ENCODE measurements at regions of chr15 and their contacts with region 1.

Region 1: DNA sequence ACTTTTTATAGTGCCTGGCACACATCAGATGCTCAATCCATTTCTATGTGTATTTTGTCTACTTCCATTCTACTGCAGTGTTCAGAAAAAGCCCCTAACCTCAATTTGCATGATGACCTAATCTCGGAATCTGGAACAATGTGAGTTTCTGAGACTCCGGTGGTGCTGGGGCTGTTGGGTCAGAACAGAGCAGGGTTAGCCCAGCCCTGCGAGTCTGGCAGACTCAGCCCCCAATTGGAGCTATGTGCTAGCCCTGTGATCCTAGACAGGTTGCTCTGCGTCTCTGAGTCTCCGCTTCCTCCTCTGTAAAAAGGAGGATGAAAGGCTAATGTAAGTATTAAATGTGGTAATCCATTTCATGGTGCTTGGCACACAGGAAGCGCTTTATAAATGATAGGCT is 95.0 kb upstream of the ICE2 start:
- DNase-seq: peak; percentile 70
- ATAC-seq: peak; percentile 68
- H3K4me3 Mint-ChIP-seq: peak overlapping the region; percentile 58
- H3K27ac Mint-ChIP-seq: peak overlapping the region; percentile 96
- H3K4me1 Mint-ChIP-seq: peaks cover 88% of the 10 kb centered on the region
- H3K27me3 Mint-ChIP-seq: no peaks in the 10 kb centered on the region

Region 2: DNA sequence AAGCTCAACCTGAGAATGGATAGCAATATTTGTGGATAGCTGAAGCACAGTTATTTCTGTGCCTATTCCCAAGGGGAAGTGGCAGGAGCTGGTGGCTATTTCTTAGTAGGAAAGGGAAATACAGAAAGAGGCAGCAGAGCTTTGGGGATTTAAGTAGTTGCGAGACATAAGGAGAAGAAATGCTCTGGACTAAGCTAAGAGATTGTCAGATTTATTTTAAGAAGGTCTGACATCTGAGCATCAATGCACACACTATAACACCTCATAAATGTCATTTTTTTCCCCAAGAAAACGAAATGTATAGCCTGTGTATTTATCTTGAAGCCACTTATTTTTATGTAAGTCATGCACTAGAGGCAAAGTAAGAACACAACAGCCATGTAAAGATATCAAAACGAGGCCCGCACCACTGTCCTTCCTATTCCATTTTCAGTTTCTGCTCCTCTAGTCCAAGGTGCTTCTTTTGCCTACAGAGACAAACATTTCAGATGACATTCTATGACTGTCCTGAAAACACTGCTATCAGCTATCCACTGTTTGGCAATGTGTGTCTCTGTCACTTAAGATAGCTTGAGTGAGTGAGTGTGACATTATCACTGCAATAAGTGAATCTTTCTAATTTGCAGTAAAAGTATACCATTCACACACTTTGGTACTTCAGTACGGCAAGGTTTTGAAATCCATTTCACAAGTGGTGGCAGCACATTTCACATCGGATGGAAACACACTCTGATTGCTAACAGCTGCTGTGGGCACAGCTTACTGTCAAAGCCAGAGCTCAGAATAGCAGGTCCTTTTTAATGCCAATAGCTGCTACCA is 32.2 kb before region 1 on chr15:
- CTCF ChIA-PET with region 1: interaction called, 5 read pairs
- POLR2A ChIA-PET with region 1: interaction called, 5 read pairs
- intact Hi-C with region 1: loop called in 1 of 2 experiments (anchors 5 kb)
- DNase-seq: no peak
- ATAC-seq: peak; percentile 19
- H3K4me3 Mint-ChIP-seq: peak overlapping the region; percentile 12
- H3K27ac Mint-ChIP-seq: peak overlapping the region; percentile 12
- H3K4me1 Mint-ChIP-seq: peaks cover 95% of the 10 kb centered on the region
- H3K27me3 Mint-ChIP-seq: no peaks in the 10 kb centered on the region

Region 3: GRCh38 chr15:60620708-60621107 is 46.8 kb after region 1 on chr15:
- CTCF ChIA-PET with region 1: no interaction called
- POLR2A ChIA-PET with region 1: no interaction called
- intact Hi-C with region 1: no loop called
- DNase-seq: no peak
- ATAC-seq: no peak
- H3K4me3 Mint-ChIP-seq: no peak overlapping the region
- H3K27ac Mint-ChIP-seq: no peak overlapping the region
- H3K4me1 Mint-ChIP-seq: no peaks in the 10 kb centered on the region
- H3K27me3 Mint-ChIP-seq: no peaks in the 10 kb centered on the region

Measured in activated CD4-positive, alpha-beta T cell treated with anti-CD3 and anti-CD28 coated beads for 36 hours (primary cell).